Activated naive CD4-positive, alpha-beta T cell treated with anti-CD3 and anti-CD28 coated beads, Interleukin-2, amount 10 ng/mL, durations not matched to agents 7 days and 5 days (primary cell): ENCODE measurements at regions of chr16 and their contacts with region 1.

Region 1: DNA sequence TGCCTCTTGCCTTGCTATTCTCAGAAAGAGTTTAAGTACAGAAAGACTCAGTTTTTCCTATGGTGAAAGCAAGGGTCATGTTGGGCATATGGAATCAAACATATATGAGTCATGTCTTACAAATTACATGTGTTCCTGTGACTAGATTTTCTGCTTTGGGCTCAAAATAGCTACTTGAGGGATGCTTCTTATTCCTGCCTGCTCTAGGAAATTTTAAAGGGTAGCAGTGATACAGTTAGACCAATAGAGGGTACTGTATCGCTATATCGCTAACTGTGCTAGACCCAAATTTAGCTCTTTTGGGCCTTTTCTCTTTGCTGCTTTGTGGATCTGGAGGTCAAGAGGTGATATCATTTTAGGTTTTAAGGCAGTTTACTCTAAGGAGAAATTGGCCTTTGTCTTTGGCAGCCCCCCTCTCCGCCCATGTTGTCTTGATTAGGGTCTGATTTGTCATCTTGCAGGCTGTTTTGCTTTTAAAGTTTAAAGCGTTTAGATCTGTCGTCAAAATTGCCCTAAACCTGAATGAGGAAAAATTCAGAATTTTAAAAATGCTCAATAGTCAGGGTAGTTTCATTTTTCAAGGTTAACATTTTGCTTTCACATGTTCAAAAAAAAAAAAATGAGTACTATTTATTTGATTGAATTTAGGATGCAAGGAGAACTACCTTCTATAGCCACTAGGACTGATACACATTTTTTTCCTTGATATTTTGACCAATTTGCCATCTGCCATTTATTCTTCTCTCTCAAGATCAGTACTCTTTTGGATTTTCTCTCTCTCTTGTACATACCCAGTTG is 8.8 kb downstream of the NFATC3 start:
- DNase-seq: no peak
- H3K4me3 Mint-ChIP-seq: no peak overlapping the region
- H3K27ac Mint-ChIP-seq: no peak overlapping the region
- H3K4me1 Mint-ChIP-seq: peaks cover 69% of the 10 kb centered on the region
- H3K27me3 Mint-ChIP-seq: no peaks in the 10 kb centered on the region

Region 2: DNA sequence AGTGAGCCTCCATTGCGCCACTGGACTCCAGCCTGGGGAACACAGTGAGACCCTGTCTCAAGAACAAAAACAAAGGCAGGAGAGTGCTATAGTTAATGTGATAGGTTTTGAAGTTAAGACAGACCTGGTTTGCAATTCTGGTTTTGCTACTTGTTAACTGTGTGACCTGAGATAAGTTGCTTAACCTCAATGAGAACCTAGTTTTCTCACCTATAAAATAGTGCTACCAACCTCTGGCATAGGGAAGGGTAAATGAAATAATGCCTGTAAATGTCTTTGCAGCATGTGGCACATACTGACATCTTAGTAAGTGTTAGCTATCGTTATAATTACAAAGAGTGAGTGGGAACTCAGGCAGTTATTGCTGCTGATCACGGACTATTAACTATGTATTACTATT is 38.6 kb before region 1 on chr16:
- CTCF ChIA-PET with region 1: no interaction called
- DNase-seq: no peak
- H3K4me3 Mint-ChIP-seq: no peak overlapping the region
- H3K27ac Mint-ChIP-seq: no peak overlapping the region
- H3K4me1 Mint-ChIP-seq: peaks cover 21% of the 10 kb centered on the region
- H3K27me3 Mint-ChIP-seq: no peaks in the 10 kb centered on the region

Region 3: DNA sequence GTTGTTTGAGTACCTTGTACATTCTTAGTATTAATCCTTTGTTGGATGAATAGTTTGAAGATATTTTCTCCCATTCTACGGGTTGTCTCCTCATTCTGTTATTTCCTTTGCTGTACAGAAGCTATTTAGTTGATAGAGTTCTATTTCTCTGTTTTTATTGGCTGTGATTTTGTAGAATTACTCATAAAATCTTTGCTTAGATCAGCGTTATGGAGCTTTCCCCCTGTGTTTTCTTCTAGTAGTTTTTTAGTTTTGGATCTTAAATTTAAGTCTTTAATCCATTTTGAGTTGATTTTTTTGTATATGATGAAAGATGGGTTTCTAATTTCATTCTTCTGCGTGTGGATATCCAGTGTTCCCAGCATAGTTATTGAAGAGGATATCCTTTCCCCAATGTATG is 36.5 kb after region 1 on chr16:
- CTCF ChIA-PET with region 1: no interaction called
- DNase-seq: no peak
- H3K4me3 Mint-ChIP-seq: no peak overlapping the region
- H3K27ac Mint-ChIP-seq: peak overlapping the region; percentile 29
- H3K4me1 Mint-ChIP-seq: peaks cover 36% of the 10 kb centered on the region
- H3K27me3 Mint-ChIP-seq: no peaks in the 10 kb centered on the region

Region 4: GRCh38 chr16:68229431-68230198 is 135.6 kb after region 1 on chr16:
- CTCF ChIA-PET with region 1: interaction called, 47 read pairs
- DNase-seq: peak; percentile 62
- H3K4me3 Mint-ChIP-seq: no peak overlapping the region
- H3K27ac Mint-ChIP-seq: peak overlapping the region; percentile 52
- H3K4me1 Mint-ChIP-seq: peaks cover 40% of the 10 kb centered on the region
- H3K27me3 Mint-ChIP-seq: no peaks in the 10 kb centered on the region